Esophagus muscularis mucosa (tissue), 4 donors: ENCODE measurements at regions of chr2 and their contacts with region 1.

Region 1: GRCh38 chr2:42339191-42339912 is 21.7 kb downstream of the COX7A2L start:
- DNase-seq: peak; percentile 88
- H3K4me3 ChIP-seq: no peak overlapping the region
- H3K27ac ChIP-seq: no peak overlapping the region
- H3K4me1 ChIP-seq: peaks cover 14 to 23% (median 19%) of the 10 kb centered on the region in 4 donors
- H3K27me3 ChIP-seq: no peaks in the 10 kb centered on the region
- CTCF ChIP-seq: no peak
- EP300 ChIP-seq: no peak
- POLR2A ChIP-seq: no peak

Region 2: GRCh38 chr2:41840702-41841551 is 498.4 kb before region 1 on chr2:
- intact Hi-C with region 1: loop called (anchors 10 kb)
- DNase-seq: peak; percentile 99
- H3K4me3 ChIP-seq: peak overlapping the region; percentile 65 to 77 (median 72)
- H3K27ac ChIP-seq: peak overlapping the region; percentile 78 to 85 (median 82)
- H3K4me1 ChIP-seq: peaks cover 7 to 16% (median 13%) of the 10 kb centered on the region in 4 donors
- H3K27me3 ChIP-seq: peaks cover 0 to 15% (median 0%) of the 10 kb centered on the region in 4 donors
- CTCF ChIP-seq: peak in 2 of 3 experiments; percentile 96 to 99
- EP300 ChIP-seq: no peak
- POLR2A ChIP-seq: no peak